ENCODE measurements at regions of chrX and their contacts with region 1.

Region 1: GRCh38 chrX:30735839-30736238 is 82.6 kb downstream of the GK start:
- DNase-seq: peak; percentile 47
- H3K4me3 ChIP-seq: no peak overlapping the region
- H3K27ac ChIP-seq: no peak overlapping the region
- H3K4me1 ChIP-seq: no peaks in the 10 kb centered on the region
- H3K27me3 ChIP-seq: peaks cover 2% of the 10 kb centered on the region
- CTCF ChIP-seq: peak; percentile 90 to 92

Region 2: GRCh38 chrX:30822068-30822681 is 86.3 kb after region 1 on chrX:
- CTCF ChIA-PET with region 1: interaction called, 4 read pairs
- dilution Hi-C with region 1: no loop called
- in situ Hi-C with region 1: loop called (anchors 5 to 25 kb)
- intact Hi-C with region 1: loop called (anchors 1 kb)
- DNase-seq: no peak
- H3K4me3 ChIP-seq: no peak overlapping the region
- H3K27ac ChIP-seq: no peak overlapping the region
- H3K4me1 ChIP-seq: no peaks in the 10 kb centered on the region
- H3K27me3 ChIP-seq: no peaks in the 10 kb centered on the region
- CTCF ChIP-seq: peak; percentile 25 to 46

Region 3: GRCh38 chrX:30831082-30831481 is 95.2 kb after region 1 on chrX:
- CTCF ChIA-PET with region 1: no interaction called
- dilution Hi-C with region 1: no loop called
- in situ Hi-C with region 1: loop called in 1 of 2 experiments (anchors 25 kb)
- intact Hi-C with region 1: no loop called
- DNase-seq: no peak
- H3K4me3 ChIP-seq: peak overlapping the region in 2 of 3 experiments; percentile 1 to 13
- H3K27ac ChIP-seq: no peak overlapping the region
- H3K4me1 ChIP-seq: no peaks in the 10 kb centered on the region
- H3K27me3 ChIP-seq: no peaks in the 10 kb centered on the region
- CTCF ChIP-seq: no peak

Region 4: GRCh38 chrX:30971774-30972603 is 236.2 kb after region 1 on chrX:
- CTCF ChIA-PET with region 1: no interaction called
- dilution Hi-C with region 1: no loop called
- in situ Hi-C with region 1: no loop called
- intact Hi-C with region 1: loop called (anchors 2 kb)
- DNase-seq: peak; percentile 37
- H3K4me3 ChIP-seq: peak overlapping the region in 2 of 3 experiments; percentile 14 to 19
- H3K27ac ChIP-seq: no peak overlapping the region
- H3K4me1 ChIP-seq: no peaks in the 10 kb centered on the region
- H3K27me3 ChIP-seq: peaks cover 4% of the 10 kb centered on the region
- CTCF ChIP-seq: peak; percentile 78 to 85

Measured in mammary epithelial cell (primary cell).